Activated naive CD4-positive, alpha-beta T cell treated with anti-CD3 and anti-CD28 coated beads for 36 hours (primary cell): ENCODE measurements at regions of chr17 and their contacts with region 1.

Region 1: GRCh38 chr17:1673041-1673785 is 11.5 kb downstream of the PRPF8 start:
- DNase-seq: no peak
- H3K4me3 Mint-ChIP-seq: no peak overlapping the region
- H3K27ac Mint-ChIP-seq: no peak overlapping the region
- H3K4me1 Mint-ChIP-seq: peaks cover 8% of the 10 kb centered on the region
- H3K27me3 Mint-ChIP-seq: no peaks in the 10 kb centered on the region

Region 2: GRCh38 chr17:1648963-1649843 is 24.0 kb before region 1 on chr17:
- CTCF ChIA-PET with region 1: interaction called, 13 read pairs
- intact Hi-C with region 1: no loop called
- DNase-seq: peak; percentile 94
- H3K4me3 Mint-ChIP-seq: peak overlapping the region; percentile 62
- H3K27ac Mint-ChIP-seq: no peak overlapping the region
- H3K4me1 Mint-ChIP-seq: peaks cover 40% of the 10 kb centered on the region
- H3K27me3 Mint-ChIP-seq: no peaks in the 10 kb centered on the region

Region 3: GRCh38 chr17:1661045-1661444 is 12.2 kb before region 1 on chr17:
- CTCF ChIA-PET with region 1: interaction called, 16 read pairs
- intact Hi-C with region 1: no loop called
- DNase-seq: no peak
- H3K4me3 Mint-ChIP-seq: no peak overlapping the region
- H3K27ac Mint-ChIP-seq: no peak overlapping the region
- H3K4me1 Mint-ChIP-seq: no peaks in the 10 kb centered on the region
- H3K27me3 Mint-ChIP-seq: no peaks in the 10 kb centered on the region

Region 4: GRCh38 chr17:1684378-1685189 is 11.4 kb after region 1 on chr17 and contains the start of gene PRPF8:
- CTCF ChIA-PET with region 1: interaction called, 14 read pairs
- intact Hi-C with region 1: no loop called
- DNase-seq: peak; percentile 99
- H3K4me3 Mint-ChIP-seq: peak within 1 kb of the TSS; percentile 95
- H3K27ac Mint-ChIP-seq: peak within 1 kb of the TSS; percentile 93
- H3K4me1 Mint-ChIP-seq: peaks cover 31% of the 10 kb centered on the region
- H3K27me3 Mint-ChIP-seq: no peaks in the 10 kb centered on the region
- total RNA-seq, gene PRPF8: 458 to 479 TPM

Region 5: DNA sequence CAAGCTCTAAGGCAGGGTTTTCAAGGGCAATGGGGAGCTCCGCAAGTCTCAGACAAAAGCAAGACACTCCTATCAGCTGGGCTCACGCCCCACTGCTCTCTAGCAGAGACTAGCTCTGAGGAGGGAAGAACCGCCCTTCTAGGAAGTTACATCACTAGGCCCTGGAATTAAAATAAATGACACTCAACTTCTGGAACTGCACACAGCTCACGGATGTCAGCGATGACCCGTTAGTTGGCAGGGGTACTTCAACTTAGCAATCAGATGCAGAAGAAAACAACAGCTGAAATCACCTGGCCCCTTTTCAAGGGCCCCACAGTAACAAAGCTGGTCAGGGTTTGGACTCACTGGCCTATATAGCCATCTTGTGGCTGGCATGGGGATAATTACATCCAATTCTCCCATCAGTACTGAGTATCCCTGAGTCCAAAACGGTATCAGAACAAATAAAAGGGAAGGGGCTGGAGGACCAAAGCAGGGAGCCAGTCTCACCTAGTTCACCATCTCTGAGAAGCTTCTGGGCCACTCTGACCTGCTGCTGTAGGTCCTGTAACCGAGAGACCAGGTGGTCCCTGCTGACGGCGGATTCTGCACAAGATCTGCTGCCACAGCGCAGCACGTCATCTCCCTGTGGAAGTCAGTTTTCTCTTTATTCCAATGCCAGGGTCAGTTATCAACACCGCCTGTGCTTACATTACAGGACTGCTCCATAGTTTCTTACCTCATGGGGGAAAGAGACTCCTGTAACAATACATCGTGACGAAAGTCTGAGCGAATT is 110.8 kb after region 1 on chr17:
- CTCF ChIA-PET with region 1: interaction called, 3 read pairs
- intact Hi-C with region 1: loop called (anchors 1 kb)
- DNase-seq: no peak
- H3K4me3 Mint-ChIP-seq: no peak overlapping the region
- H3K27ac Mint-ChIP-seq: peak overlapping the region; percentile 58
- H3K4me1 Mint-ChIP-seq: no peaks in the 10 kb centered on the region
- H3K27me3 Mint-ChIP-seq: no peaks in the 10 kb centered on the region

Region 6: GRCh38 chr17:1847191-1847590 is 174.0 kb after region 1 on chr17:
- CTCF ChIA-PET with region 1: no interaction called
- intact Hi-C with region 1: no loop called
- DNase-seq: no peak
- H3K4me3 Mint-ChIP-seq: no peak overlapping the region
- H3K27ac Mint-ChIP-seq: no peak overlapping the region
- H3K4me1 Mint-ChIP-seq: no peaks in the 10 kb centered on the region
- H3K27me3 Mint-ChIP-seq: no peaks in the 10 kb centered on the region

Region 7: DNA sequence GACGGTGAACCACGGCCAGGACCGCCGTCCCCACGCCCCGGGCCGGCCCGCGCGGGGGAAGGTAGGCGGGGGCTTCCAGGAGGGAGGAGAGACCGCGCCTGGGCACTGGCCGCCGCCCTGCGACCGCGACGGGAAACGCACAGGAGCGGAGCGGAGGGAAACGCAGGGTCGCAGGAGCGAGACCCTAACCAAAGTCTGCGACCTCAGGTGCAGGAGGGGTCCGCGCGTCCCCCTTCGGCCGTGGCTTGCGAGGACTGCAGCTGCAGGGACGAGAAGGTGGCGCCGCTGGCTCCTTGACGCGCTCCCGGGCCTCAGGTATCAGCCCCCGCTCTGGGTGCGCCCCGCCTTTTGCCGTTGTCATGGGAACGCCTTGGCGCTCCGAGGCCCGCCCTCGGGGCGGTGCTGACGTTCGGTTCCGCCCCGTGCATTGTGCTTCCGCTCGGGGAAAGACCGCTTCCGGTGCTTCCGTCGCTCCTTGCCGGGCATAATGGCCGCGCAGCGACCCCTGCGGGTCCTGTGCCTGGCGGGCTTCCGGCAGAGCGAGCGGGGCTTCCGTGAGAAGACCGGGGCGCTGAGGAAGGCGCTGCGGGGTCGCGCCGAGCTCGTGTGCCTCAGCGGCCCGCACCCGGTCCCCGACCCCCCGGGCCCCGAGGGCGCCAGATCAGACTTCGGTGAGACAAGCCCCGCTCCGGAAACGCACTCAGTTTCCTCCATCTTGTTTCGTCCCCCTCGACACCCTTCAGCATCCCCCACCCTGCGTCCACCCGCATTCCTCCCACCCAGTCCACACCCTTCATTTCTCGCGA is 368.6 kb after region 1 on chr17 and contains the start of gene OVCA2:
- CTCF ChIA-PET with region 1: no interaction called
- intact Hi-C with region 1: loop called (anchors 5 kb)
- DNase-seq: peak; percentile 97
- H3K4me3 Mint-ChIP-seq: peak within 1 kb of the TSS; percentile 94
- H3K27ac Mint-ChIP-seq: peak within 1 kb of the TSS; percentile 93
- H3K4me1 Mint-ChIP-seq: peaks cover 27% of the 10 kb centered on the region
- H3K27me3 Mint-ChIP-seq: no peaks in the 10 kb centered on the region
- total RNA-seq, gene OVCA2: 22.7 to 24.7 TPM